CD4-positive, alpha-beta T cell (primary cell): ENCODE measurements at regions of chr11 and their contacts with region 1.

Region 1: DNA sequence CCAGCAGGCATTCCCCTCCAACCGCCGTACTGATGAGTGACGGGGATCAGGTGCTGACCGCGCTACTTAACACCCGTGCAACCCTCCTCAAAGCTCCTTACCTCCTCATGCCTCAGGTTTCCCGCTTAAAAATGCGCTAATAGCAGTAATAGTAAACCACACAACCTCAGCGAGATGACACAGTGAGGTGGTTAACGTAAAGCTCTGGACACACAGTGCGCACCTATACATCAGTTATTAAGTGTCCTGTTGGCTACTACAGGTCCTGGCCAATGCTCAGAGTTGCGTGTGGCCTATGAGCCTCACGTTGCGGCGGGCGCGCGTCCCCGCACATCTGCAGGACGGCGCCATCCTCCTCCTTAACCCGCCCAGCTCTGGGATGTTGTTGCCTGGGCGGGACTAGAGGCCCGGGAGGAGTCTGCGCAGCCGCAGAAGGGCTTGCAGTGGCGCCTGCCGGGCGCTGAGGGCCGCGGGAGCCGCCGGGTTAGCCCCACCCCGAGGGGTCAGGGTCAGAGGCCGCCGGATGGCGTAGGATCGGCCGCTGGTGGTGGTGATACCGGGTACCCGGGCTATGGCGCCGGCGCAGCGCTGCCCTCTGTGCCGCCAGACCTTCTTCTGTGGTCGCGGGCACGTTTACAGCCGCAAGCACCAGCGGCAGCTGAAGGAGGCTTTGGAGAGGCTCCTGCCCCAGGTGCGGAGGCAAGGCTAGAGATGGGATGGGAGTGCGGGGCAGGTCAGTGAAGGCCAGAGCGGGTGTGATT is at the start of gene CENATAC:
- DNase-seq: peak; percentile 90 to 98 (median 96)
- ATAC-seq: peak; percentile 91
- H3K4me3 ChIP-seq: peak within 1 kb of the TSS; percentile 74
- H3K4me3 Mint-ChIP-seq: peak within 1 kb of the TSS; percentile 98
- H3K27ac ChIP-seq: peak within 1 kb of the TSS; percentile 74 to 78
- H3K27ac Mint-ChIP-seq: peak within 1 kb of the TSS; percentile 90
- H3K4me1 ChIP-seq: peaks cover 31% of the 10 kb centered on the region
- H3K4me1 Mint-ChIP-seq: peaks cover 46% of the 10 kb centered on the region
- H3K27me3 ChIP-seq: no peaks in the 10 kb centered on the region
- H3K27me3 Mint-ChIP-seq: no peaks in the 10 kb centered on the region
- CTCF ChIP-seq: no peak
- total RNA-seq, gene CENATAC: 121 to 122 TPM

Region 2: DNA sequence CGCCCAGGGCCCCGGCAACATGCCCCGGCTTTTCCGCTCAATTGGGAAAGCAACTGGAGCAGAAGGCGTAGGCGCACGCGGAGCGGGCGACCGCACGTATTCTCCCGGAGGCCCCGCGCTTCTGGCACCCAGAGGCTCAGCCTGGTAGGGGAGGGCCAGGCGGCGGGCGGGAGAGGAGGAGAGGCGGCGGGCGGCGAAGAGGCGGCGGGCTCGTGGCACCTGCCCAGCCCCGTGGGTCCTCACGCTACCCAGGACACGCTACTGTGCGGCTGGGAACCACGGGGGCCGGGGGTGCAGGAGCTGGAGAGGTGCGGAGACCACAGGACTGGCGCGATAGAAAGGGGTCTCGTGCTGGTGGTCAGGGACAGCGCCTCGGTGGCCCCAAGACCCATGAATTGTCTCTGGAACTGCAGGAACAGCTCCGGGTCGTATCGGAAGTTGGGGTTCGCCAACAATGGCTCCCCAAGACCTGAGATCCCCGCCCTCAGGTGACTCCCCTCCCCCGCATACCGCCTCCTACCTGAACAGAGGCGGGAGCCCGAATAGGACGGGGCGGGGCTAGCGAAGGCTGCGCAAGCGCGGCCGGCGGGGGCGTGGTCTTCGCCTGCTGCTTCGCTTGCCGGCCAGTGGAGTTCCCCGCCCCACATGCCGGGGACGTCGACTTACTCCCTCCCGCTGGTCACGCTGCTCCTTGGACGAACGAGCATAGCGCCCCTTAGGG is 32.7 kb after region 1 on chr11 and contains the start of gene SLC37A4:
- CTCF ChIA-PET with region 1: interaction called, 3 read pairs
- POLR2A ChIA-PET with region 1: interaction called, 10 read pairs
- intact Hi-C with region 1: loop called (anchors 1 to 5 kb)
- DNase-seq: peak; percentile 96 to 100 (median 99)
- ATAC-seq: peak; percentile 95
- H3K4me3 ChIP-seq: peak within 1 kb of the TSS; percentile 91
- H3K4me3 Mint-ChIP-seq: peak within 1 kb of the TSS; percentile 96
- H3K27ac ChIP-seq: peak within 1 kb of the TSS; percentile 73 to 74
- H3K27ac Mint-ChIP-seq: peak within 1 kb of the TSS; percentile 92
- H3K4me1 ChIP-seq: peaks cover 29% of the 10 kb centered on the region
- H3K4me1 Mint-ChIP-seq: peaks cover 22% of the 10 kb centered on the region
- H3K27me3 ChIP-seq: no peaks in the 10 kb centered on the region
- H3K27me3 Mint-ChIP-seq: no peaks in the 10 kb centered on the region
- CTCF ChIP-seq: peak; percentile 75
- total RNA-seq, gene SLC37A4: 5.2 to 6.6 TPM